ENCODE measurements at regions of chr2 and their contacts with region 1.

Region 1: DNA sequence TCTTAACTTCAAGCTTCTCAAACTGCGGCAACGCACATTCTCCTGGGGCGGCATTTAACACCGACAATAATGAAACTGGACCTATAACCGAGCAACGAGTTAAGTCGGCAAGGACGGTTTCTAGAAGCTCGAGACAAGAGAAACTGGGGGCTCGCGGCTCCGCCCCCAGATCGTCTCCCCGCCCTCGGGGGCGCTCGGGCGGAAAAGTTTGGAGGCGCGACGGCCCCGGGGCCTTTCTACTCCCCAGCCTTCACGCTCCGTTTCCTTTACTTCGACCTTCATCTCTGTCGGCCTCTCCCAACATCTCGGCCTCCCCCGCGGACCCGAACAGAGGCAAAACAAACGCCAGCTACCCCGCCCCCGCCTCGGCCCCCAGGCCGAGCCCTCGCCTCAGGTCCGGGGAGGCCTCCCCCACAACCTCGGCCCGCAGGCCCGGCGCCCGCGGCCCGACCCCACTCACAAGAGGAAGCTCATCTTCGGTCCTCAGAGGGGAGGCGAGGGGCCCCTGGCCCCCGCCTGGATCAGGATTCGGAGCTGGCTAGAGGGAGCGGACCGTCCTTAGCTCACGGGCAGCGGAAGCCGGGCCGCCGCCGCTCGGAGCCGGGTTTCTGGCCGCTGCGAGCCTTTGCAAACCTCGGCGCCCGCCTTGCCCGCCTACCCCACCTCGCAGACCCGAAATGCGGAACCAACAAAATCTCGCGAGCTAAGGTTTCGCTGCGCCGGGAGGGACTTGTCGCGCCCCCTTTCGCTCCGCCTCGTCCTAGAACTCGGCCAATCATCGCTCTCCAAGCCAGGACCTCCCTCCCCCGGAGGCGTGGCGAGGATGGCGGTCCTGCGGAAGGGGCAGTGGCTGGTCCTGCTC is at the start of gene MOB1A:
- DNase-seq: peak; percentile 98 to 99 (median 99)
- ATAC-seq: peak; percentile 99
- H3K4me3 ChIP-seq: peak within 1 kb of the TSS; percentile 66 to 94 (median 79)
- H3K27ac ChIP-seq: peak within 1 kb of the TSS; percentile 56 to 98 (median 92)
- H3K4me1 ChIP-seq: peaks cover 0 to 60% (median 27%) of the 10 kb centered on the region in 12 donors
- H3K27me3 ChIP-seq: no peaks in the 10 kb centered on the region
- CTCF ChIP-seq: peak in 1 of 12 donors; percentile 14
- POLR2A ChIP-seq: peak; percentile 61 to 95
- total RNA-seq, gene MOB1A: 42.2 to 104 (median 55.4) TPM

Region 2: GRCh38 chr2:74119912-74120825 is 58.3 kb before region 1 on chr2:
- intact Hi-C with region 1: loop called in 1 of 10 experiments (anchors 2 kb)
- DNase-seq: peak; percentile 81 to 90 (median 88)
- ATAC-seq: peak; percentile 88 to 100 (median 99)
- H3K4me3 ChIP-seq: peak overlapping the region; percentile 55 to 86 (median 68)
- H3K27ac ChIP-seq: peak overlapping the region in 11 of 12 donors; percentile 41 to 90 (median 78)
- H3K4me1 ChIP-seq: peaks cover 0 to 13% (median 2%) of the 10 kb centered on the region in 12 donors
- H3K27me3 ChIP-seq: no peaks in the 10 kb centered on the region
- CTCF ChIP-seq: peak; percentile 17 to 87 (median 58)
- POLR2A ChIP-seq: no peak

Region 3: DNA sequence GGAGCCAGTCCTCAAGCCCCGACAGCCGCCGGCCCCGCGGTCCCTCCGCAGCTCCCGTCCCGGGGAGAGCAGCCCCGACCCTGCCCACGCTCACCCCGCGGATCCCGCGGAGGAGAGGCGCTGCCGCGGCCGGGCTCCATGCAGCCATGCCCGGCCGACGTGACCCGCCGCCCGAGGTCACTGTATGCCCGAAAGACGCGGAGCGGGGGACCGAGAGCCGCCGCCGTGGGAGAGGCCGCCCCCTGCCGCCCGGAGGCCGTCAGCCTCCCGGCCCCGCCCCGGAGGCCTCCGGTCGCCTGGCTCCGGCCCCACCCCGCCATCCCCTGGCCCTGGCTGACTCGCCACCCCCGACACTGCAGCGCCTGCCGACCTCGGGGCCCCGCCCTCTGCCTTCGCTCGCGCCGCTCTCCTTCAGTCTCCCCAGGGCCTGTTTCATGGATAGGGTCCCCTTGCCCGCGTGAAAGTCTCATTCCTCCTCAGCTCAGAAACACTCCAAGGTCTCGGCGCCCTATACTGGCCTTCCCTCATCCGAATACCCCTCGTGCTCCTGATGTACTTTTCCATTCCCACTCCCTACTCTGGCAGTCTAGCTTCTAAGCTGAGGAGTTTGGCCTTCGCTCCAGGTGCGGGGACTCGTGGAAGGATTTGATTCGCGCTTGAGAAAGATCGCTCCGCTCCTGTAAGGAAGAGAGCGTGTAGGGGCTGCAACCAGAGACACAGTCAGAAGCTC is 30.5 kb before region 1 on chr2 and contains the start of gene BOLA3:
- intact Hi-C with region 1: loop called in 1 of 10 experiments (anchors 2 kb)
- DNase-seq: peak; percentile 89 to 94 (median 90)
- ATAC-seq: peak; percentile 76 to 99 (median 97)
- H3K4me3 ChIP-seq: peak within 1 kb of the TSS; percentile 66 to 99 (median 88)
- H3K27ac ChIP-seq: peak within 1 kb of the TSS in 11 of 12 donors; percentile 62 to 81 (median 74)
- H3K4me1 ChIP-seq: peaks cover 3 to 25% (median 16%) of the 10 kb centered on the region in 12 donors
- H3K27me3 ChIP-seq: no peaks in the 10 kb centered on the region
- CTCF ChIP-seq: peak; percentile 59 to 95 (median 82)
- POLR2A ChIP-seq: peak in 1 of 2 donors; percentile 58
- total RNA-seq, gene BOLA3: 52.2 to 165 (median 65.3) TPM

Region 4: DNA sequence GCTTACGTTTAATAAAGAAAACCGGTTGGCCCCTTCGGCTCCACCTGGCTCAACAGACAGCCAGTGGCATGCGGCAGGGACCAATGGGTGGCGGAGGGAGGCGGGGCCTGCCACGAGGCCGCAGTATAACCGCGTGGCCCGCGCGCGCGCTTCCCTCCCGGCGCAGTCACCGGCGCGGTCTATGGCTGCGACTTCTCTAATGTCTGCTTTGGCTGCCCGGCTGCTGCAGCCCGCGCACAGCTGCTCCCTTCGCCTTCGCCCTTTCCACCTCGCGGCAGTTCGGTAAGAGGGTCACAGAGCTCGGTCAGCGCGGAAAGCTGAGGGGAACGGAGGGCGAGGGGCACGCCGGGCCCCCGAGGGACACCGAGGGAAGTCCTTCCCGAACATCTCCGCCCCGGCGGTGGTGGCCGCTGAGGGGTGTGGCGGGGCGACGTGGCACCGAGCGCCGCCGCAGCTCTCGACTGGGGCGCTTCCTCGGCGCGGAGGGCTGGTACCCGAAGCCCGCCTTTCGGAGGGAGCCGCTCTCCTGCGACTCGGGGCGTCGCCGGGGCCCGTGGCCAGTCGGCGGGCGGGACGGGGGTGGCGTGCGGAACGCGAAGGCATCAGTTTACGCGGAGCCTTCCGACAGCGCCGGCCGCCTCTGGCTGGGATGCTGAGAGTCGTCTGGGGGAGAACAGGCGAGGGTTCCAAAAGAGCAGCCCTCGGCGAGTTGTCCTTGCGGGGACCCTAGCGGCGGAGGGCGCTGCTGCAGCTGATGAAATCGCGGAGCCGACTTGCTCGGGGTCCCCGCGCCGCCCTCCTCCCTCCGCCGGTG is 20.2 kb after region 1 on chr2 and contains the start of gene MTHFD2:
- intact Hi-C with region 1: loop called in 2 of 10 experiments (anchors 1 to 2 kb)
- DNase-seq: peak; percentile 89 to 95 (median 92)
- ATAC-seq: peak; percentile 86 to 97 (median 96)
- H3K4me3 ChIP-seq: peak within 1 kb of the TSS; percentile 64 to 93 (median 74)
- H3K27ac ChIP-seq: peak within 1 kb of the TSS; percentile 76 to 99 (median 90)
- H3K4me1 ChIP-seq: peaks cover 0 to 53% (median 24%) of the 10 kb centered on the region in 12 donors
- H3K27me3 ChIP-seq: no peaks in the 10 kb centered on the region
- CTCF ChIP-seq: peak; percentile 55 to 83 (median 74)
- POLR2A ChIP-seq: peak in 1 of 2 donors; percentile 79
- total RNA-seq, gene MTHFD2: 13.0 to 40.5 (median 17.5) TPM

Measured in heart left ventricle (tissue), 16 donors.